K562 (cell line): ENCODE measurements at regions of chr2 and their contacts with region 1.

Region 1: GRCh38 chr2:19362755-19363473 is 4.5 kb upstream of the OSR1 start:
- DNase-seq: peak; percentile 72 to 79 (median 73)
- ATAC-seq: peak; percentile 93
- H3K4me3 ChIP-seq: 0 out of 2 replicates have a peak overlapping the region, but pooled peaks have one; percentile 14
- H3K27ac ChIP-seq: no peak overlapping the region
- H3K4me1 ChIP-seq: peaks cover 0 to 11% of the 10 kb centered on the region in 2 experiments; a peak in 1 of 5 replicates
- H3K27me3 ChIP-seq: peaks cover 24 to 43% of the 10 kb centered on the region in 2 experiments; a peak in 4 of 5 replicates
- CTCF ChIP-seq: peak; percentile 68 to 79 (median 77)
- EP300 ChIP-seq: no peak
- POLR2A ChIP-seq: no peak
- RAD21 ChIP-seq: peak; percentile 80

Region 2: DNA sequence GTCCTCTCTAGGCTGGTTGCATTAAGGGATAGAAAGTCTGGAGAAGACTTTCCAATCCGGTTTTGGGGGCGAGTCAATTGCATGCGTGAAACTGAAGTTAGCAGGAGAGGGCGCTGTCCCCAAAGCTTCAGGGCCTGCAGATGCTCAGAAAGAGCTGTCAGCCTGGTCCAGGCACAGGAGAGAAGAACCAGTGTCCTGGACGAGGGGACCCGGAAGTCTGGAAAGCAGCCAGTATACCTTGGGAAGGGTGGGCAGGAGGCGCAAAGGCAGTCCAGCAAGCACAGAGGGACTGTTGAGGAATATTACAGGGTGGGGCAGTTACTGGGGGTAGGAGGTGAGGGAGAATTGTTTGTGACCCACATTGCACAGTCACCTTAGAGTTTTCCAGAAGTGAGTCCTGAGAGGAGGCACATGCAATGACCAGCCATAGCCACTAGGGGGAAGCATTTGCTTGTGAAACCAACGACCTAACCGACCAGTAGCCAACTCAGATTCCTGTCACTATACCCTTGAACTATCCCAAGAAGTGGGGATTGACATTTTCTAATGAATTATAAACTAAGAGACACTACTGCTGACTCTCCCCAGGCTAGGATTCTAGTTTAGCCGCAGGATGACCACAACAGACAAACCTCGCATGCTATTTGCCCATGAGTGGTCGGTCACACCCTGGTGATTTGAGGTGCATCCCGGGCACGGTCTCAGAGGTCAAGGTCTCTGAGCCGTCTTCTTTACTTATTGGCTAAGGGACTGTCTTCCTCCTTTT is 975.3 kb before region 1 on chr2:
- CTCF ChIA-PET with region 1: no interaction called
- POLR2A ChIA-PET with region 1: no interaction called
- in situ Hi-C with region 1: no loop called
- intact Hi-C with region 1: loop called (anchors 1 kb)
- DNase-seq: peak; percentile 52 to 75 (median 71)
- ATAC-seq: peak; percentile 98
- H3K4me3 ChIP-seq: no peak overlapping the region
- H3K27ac ChIP-seq: no peak overlapping the region
- H3K4me1 ChIP-seq: no peaks in the 10 kb centered on the region
- H3K27me3 ChIP-seq: no peaks in the 10 kb centered on the region
- CTCF ChIP-seq: peak; percentile 72 to 87 (median 85)
- EP300 ChIP-seq: no peak
- POLR2A ChIP-seq: no peak
- RAD21 ChIP-seq: peak; percentile 68 to 73

Region 3: GRCh38 chr2:18435421-18436037 is 927.4 kb before region 1 on chr2:
- CTCF ChIA-PET with region 1: interaction called, 3 read pairs
- POLR2A ChIA-PET with region 1: no interaction called
- in situ Hi-C with region 1: loop called (anchors 25 kb)
- intact Hi-C with region 1: loop called (anchors 2 kb)
- DNase-seq: peak in 2 of 4 experiments; percentile 20 to 63
- ATAC-seq: peak; percentile 75
- H3K4me3 ChIP-seq: no peak overlapping the region
- H3K27ac ChIP-seq: no peak overlapping the region
- H3K4me1 ChIP-seq: no peaks in the 10 kb centered on the region
- H3K27me3 ChIP-seq: no peaks in the 10 kb centered on the region
- CTCF ChIP-seq: peak; percentile 10 to 76 (median 37); a peak in 3 of 6 replicates
- EP300 ChIP-seq: no peak
- POLR2A ChIP-seq: no peak
- RAD21 ChIP-seq: peak; percentile 66 to 83

Region 4: DNA sequence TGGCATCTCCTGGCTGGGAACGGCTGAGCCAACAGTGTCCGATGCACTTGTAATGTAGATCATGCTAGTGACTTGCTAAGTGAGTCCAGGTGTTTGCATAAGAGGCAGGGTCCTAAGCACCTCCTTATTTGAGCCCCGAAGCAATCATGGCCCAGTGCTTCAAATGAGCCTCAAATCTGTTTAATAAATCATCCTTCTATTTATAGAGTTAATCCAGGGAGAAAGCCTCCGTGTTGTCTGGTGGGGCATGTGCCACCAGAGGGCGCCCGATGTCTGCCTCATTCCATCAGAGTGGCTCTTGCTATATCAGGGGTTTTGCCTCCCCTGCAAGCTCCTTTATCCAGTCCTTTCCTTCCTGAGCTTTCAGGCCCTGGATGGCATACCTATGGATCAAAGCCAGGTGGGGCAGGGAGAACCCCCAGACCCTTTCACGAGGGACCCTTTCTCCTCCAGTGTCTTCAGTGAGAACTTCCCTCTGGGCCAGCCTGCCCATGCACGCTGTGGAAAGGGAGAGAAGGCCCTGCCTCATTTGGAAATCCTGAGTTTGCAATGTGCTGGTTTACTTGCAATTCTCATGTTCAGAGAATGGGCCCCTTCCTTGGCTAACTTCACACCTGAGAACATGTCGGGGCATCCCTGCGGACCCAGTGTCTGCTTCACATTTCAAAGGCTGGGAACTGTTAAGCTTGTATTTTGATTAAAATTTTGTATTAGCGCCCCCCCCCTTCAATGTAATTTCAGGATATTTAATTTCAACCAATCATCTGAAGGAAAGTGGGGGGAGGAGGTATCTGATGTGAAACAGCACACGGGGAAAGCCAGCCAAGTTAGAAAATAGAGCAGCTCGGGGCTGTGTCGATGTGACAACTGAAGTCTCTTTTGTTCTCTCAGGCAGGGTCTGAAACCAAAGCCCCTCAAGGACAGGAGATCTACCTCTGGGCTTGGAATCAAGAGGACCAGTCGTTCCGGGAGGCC is 842.2 kb before region 1 on chr2:
- CTCF ChIA-PET with region 1: interaction called, 18 read pairs
- POLR2A ChIA-PET with region 1: no interaction called
- in situ Hi-C with region 1: no loop called
- intact Hi-C with region 1: loop called (anchors 1 kb)
- DNase-seq: peak; percentile 71 to 77 (median 75)
- ATAC-seq: peak; percentile 97
- H3K4me3 ChIP-seq: no peak overlapping the region
- H3K27ac ChIP-seq: no peak overlapping the region
- H3K4me1 ChIP-seq: 0 out of 5 replicates have a peak, but pooled peaks cover 0 to 2% of the 10 kb centered on the region in 2 experiments
- H3K27me3 ChIP-seq: peaks cover 0 to 6% of the 10 kb centered on the region in 2 experiments; a peak in 2 of 5 replicates
- CTCF ChIP-seq: peak; percentile 77 to 87 (median 85)
- EP300 ChIP-seq: no peak
- POLR2A ChIP-seq: no peak
- RAD21 ChIP-seq: peak; percentile 88 to 91

Region 5: GRCh38 chr2:18749912-18750526 is 612.9 kb before region 1 on chr2:
- CTCF ChIA-PET with region 1: interaction called, 5 read pairs
- POLR2A ChIA-PET with region 1: no interaction called
- in situ Hi-C with region 1: no loop called
- intact Hi-C with region 1: loop called (anchors 1 kb)
- DNase-seq: peak in 3 of 4 experiments; percentile 10 to 51 (median 17)
- ATAC-seq: no peak
- H3K4me3 ChIP-seq: no peak overlapping the region
- H3K27ac ChIP-seq: no peak overlapping the region
- H3K4me1 ChIP-seq: no peaks in the 10 kb centered on the region
- H3K27me3 ChIP-seq: no peaks in the 10 kb centered on the region
- CTCF ChIP-seq: peak in 2 of 3 experiments; percentile 31 to 62; a peak in 3 of 6 replicates
- EP300 ChIP-seq: no peak
- POLR2A ChIP-seq: no peak
- RAD21 ChIP-seq: peak; percentile 74 to 76

Region 6: GRCh38 chr2:18991177-18992168 is 371.4 kb before region 1 on chr2:
- CTCF ChIA-PET with region 1: no interaction called
- POLR2A ChIA-PET with region 1: no interaction called
- in situ Hi-C with region 1: no loop called
- intact Hi-C with region 1: loop called (anchors 10 kb)
- DNase-seq: no peak
- ATAC-seq: no peak
- H3K4me3 ChIP-seq: no peak overlapping the region
- H3K27ac ChIP-seq: no peak overlapping the region
- H3K4me1 ChIP-seq: no peaks in the 10 kb centered on the region
- H3K27me3 ChIP-seq: no peaks in the 10 kb centered on the region
- CTCF ChIP-seq: no peak
- EP300 ChIP-seq: no peak
- POLR2A ChIP-seq: no peak
- RAD21 ChIP-seq: no peak

Region 7: DNA sequence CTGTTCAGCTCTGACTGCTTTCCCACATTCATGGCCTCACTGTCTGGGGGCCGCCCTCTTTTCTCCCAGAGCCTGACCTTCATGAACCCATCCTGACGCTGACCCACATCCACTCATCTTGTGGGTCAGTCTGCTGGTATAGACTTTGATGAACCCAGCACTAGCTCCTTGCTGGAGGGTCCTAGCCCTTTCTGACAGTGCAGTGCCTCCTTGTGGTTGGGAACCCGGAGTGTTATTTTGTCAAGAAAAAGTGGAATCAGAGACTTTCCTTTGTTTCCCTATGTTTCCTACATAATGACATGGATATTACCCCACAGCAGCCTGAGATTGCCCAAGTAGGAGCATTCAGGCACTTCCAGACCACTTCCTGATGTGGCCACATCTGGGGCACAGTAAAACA is 14.8 kb after region 1 on chr2:
- CTCF ChIA-PET with region 1: no interaction called
- POLR2A ChIA-PET with region 1: no interaction called
- in situ Hi-C with region 1: no loop called
- intact Hi-C with region 1: no loop called
- DNase-seq: no peak
- ATAC-seq: peak; percentile 36; the same call in 1 of the 3 replicates
- H3K4me3 ChIP-seq: no peak overlapping the region
- H3K27ac ChIP-seq: no peak overlapping the region
- H3K4me1 ChIP-seq: no peaks in the 10 kb centered on the region
- H3K27me3 ChIP-seq: no peaks in the 10 kb centered on the region
- CTCF ChIP-seq: peak in 2 of 3 experiments; percentile 25; a peak in 1 of 6 replicates
- EP300 ChIP-seq: no peak
- POLR2A ChIP-seq: no peak
- RAD21 ChIP-seq: 0 out of 4 replicates have a peak, but pooled peaks of 1 of the 2 experiments have one; percentile 20

Region 8: GRCh38 chr2:19392221-19392620 is 29.3 kb after region 1 on chr2:
- CTCF ChIA-PET with region 1: no interaction called
- POLR2A ChIA-PET with region 1: no interaction called
- in situ Hi-C with region 1: no loop called
- intact Hi-C with region 1: no loop called
- DNase-seq: no peak
- ATAC-seq: no peak
- H3K4me3 ChIP-seq: no peak overlapping the region
- H3K27ac ChIP-seq: no peak overlapping the region
- H3K4me1 ChIP-seq: no peaks in the 10 kb centered on the region
- H3K27me3 ChIP-seq: no peaks in the 10 kb centered on the region
- CTCF ChIP-seq: no peak
- EP300 ChIP-seq: no peak
- POLR2A ChIP-seq: no peak
- RAD21 ChIP-seq: no peak

Region 9: GRCh38 chr2:19611491-19612332 is 248.8 kb after region 1 on chr2:
- CTCF ChIA-PET with region 1: no interaction called
- POLR2A ChIA-PET with region 1: no interaction called
- in situ Hi-C with region 1: no loop called
- intact Hi-C with region 1: no loop called
- DNase-seq: peak in 1 of 4 experiments; percentile 1
- ATAC-seq: no peak
- H3K4me3 ChIP-seq: no peak overlapping the region
- H3K27ac ChIP-seq: no peak overlapping the region
- H3K4me1 ChIP-seq: no peaks in the 10 kb centered on the region
- H3K27me3 ChIP-seq: no peaks in the 10 kb centered on the region
- CTCF ChIP-seq: no peak
- EP300 ChIP-seq: no peak
- POLR2A ChIP-seq: no peak
- RAD21 ChIP-seq: no peak

Region 10: GRCh38 chr2:19667085-19667484 is 304.2 kb after region 1 on chr2:
- CTCF ChIA-PET with region 1: no interaction called
- POLR2A ChIA-PET with region 1: no interaction called
- in situ Hi-C with region 1: no loop called
- intact Hi-C with region 1: loop called (anchors 10 kb)
- DNase-seq: no peak
- ATAC-seq: no peak
- H3K4me3 ChIP-seq: no peak overlapping the region
- H3K27ac ChIP-seq: no peak overlapping the region
- H3K4me1 ChIP-seq: no peaks in the 10 kb centered on the region
- H3K27me3 ChIP-seq: peaks cover 0 to 10% of the 10 kb centered on the region in 2 experiments; a peak in 3 of 5 replicates
- CTCF ChIP-seq: no peak
- EP300 ChIP-seq: no peak
- POLR2A ChIP-seq: no peak
- RAD21 ChIP-seq: no peak